ENCODE measurements at regions of chrX and their contacts with region 1.

Region 1: DNA sequence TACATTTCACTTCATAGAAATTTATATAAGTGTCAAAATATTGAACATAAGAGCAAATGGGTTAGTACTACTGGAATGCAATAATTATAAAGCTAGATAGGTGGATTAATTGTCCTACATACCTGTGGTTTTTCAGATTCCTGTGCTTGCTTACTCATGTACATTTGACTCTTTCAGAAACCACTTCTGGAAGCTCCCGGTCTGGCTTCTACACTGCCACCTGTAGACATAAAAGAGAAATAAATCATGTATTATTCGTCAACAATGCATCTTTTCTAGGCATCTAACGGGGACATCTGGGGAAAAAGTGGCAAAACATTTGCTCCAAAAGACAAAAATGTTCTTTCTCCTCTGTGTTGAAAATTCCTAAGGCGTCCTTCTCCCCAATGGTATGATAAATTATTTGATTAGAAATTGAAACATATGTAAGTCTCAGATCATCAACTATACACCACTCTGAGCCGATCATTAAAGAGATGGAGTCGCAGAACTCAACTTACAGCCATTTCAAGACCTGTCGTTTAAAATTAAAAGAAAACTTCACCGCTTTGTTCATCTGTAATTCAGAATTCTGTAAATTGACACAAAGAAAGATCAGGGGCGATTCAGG is 648.7 kb upstream of the DIPK2B start:
- DNase-seq: peak; percentile 8 to 78
- H3K4me3 ChIP-seq: peak overlapping the region; percentile 69
- H3K27ac ChIP-seq: peak overlapping the region; percentile 92
- H3K4me1 ChIP-seq: peaks cover 31% of the 10 kb centered on the region; the same call in 1 of the 2 replicates
- H3K27me3 ChIP-seq: no peaks in the 10 kb centered on the region
- CTCF ChIP-seq: no peak; the same call in 1 of the 2 replicates

Region 2: DNA sequence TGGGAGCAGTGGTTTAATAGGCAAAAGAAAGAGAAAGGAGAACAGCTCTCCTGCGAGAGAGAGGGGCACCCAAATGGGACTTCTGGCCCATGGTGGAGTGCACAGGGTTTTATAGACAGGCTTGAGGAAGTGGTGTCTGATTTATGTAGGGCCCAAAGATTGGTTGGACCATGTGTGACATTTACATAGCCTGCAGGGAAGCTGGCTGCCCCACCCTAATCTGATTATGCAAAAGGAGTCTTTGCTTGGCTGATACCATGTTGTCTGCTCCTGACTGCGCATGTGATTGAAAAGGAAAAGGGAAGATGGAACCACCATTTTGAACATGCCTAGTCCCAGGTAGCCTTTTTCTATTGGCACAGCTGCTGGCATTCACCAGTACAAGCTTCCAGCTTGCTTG is 548.7 kb before region 1 on chrX:
- CTCF ChIA-PET with region 1: no interaction called
- POLR2A ChIA-PET with region 1: no interaction called
- intact Hi-C with region 1: no loop called
- DNase-seq: no peak
- H3K4me3 ChIP-seq: no peak overlapping the region
- H3K27ac ChIP-seq: no peak overlapping the region
- H3K4me1 ChIP-seq: no peaks in the 10 kb centered on the region
- H3K27me3 ChIP-seq: no peaks in the 10 kb centered on the region
- CTCF ChIP-seq: no peak

Region 3: DNA sequence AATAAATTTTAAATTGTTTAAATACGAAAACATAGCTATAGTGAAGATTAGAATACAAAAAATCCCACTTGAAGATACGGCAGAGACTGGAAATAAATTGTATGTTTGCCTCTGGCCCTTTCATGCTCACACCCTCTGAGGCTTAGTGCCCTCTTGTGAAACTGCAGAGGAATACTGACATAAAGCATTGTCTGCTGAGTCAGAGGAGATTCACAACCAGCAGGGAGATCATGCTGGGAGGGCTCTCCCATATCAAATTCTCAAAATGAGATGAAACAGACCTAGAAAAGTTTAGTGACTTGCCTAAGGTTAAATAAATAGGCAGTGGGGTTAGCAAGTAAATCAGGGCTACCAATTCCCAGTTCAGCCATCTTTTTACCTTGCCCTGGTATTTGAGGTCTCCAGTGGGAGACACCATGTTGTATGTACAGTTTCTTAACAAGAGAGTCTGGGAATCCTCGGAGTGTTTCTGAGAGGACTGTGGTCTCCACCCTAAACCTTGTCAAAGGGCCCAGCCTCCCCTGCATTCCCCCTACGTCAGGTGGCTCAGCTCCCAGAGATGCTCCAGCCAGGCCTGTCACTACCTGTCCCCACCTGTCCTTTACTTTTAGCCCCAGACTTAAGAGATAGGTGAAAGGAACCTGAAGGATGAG is 67.3 kb before region 1 on chrX:
- CTCF ChIA-PET with region 1: no interaction called
- POLR2A ChIA-PET with region 1: interaction called, 33 read pairs
- intact Hi-C with region 1: no loop called
- DNase-seq: peak in 1 of 2 experiments; percentile 37
- H3K4me3 ChIP-seq: no peak overlapping the region
- H3K27ac ChIP-seq: peak overlapping the region; percentile 34; the same call in 1 of the 2 replicates
- H3K4me1 ChIP-seq: peaks cover 26% of the 10 kb centered on the region
- H3K27me3 ChIP-seq: no peaks in the 10 kb centered on the region
- CTCF ChIP-seq: no peak

Region 4: DNA sequence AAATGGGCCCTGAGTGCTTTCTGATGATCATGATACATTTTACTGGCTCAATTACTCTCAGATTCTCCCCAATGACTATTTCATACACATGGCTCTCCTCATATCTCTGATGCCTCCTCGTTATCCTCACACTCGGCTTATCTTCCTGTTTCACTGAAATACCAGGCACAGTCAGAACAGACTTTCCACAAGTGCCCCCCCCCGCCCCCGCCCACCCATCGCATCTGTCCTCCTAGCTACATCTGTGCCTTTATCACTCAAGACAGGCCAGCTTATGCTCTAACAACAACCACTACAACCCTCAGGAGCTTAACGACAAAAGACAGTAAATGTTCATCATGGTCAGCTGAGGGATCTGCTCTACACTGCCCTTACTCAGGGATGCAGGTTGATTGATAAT is 38.0 kb before region 1 on chrX:
- CTCF ChIA-PET with region 1: no interaction called
- POLR2A ChIA-PET with region 1: interaction called, 11 read pairs
- intact Hi-C with region 1: no loop called
- DNase-seq: no peak
- H3K4me3 ChIP-seq: no peak overlapping the region
- H3K27ac ChIP-seq: no peak overlapping the region
- H3K4me1 ChIP-seq: no peaks in the 10 kb centered on the region
- H3K27me3 ChIP-seq: no peaks in the 10 kb centered on the region
- CTCF ChIP-seq: no peak

Region 5: DNA sequence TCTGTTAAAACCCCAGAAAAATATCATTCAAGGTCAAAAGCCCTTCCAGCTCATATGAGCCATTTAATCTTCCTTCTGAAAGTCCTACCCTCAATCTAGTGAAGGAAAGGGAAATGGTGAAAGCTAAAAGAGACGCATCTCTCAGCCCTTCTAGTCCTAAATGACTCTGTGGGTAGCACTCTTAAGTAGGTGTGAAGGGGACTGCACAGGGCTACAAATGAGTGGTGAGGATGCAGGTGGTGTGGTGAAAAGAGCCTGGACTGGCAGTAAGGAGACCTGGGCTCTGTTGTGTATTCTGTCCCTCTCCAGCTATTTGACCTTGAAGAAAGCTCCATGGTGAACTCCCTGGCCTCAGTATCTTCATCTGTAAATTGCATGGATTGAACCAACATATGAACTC is 23.1 kb after region 1 on chrX:
- CTCF ChIA-PET with region 1: no interaction called
- POLR2A ChIA-PET with region 1: no interaction called
- intact Hi-C with region 1: no loop called
- DNase-seq: no peak
- H3K4me3 ChIP-seq: no peak overlapping the region
- H3K27ac ChIP-seq: no peak overlapping the region
- H3K4me1 ChIP-seq: no peaks in the 10 kb centered on the region
- H3K27me3 ChIP-seq: no peaks in the 10 kb centered on the region
- CTCF ChIP-seq: no peak

Region 6: DNA sequence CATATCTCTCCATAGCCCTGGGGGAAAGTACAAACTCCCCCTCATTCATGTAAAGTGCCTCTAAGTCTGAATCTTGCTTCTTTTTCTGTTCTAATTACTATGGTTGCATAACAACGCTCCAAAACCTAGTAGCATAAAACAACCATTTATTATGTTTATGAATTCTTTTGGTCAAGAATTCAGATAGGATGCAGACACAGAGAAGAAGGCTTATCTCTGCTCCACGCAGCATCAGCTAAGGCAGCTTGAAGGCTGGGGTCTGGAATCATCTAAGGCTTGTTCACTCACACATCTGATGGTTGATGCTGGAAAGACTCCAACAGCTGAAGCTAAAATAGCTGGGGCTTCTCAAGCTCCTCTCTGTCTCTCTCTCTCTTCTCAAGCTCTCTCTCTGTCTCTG is 131.4 kb after region 1 on chrX:
- CTCF ChIA-PET with region 1: no interaction called
- POLR2A ChIA-PET with region 1: no interaction called
- intact Hi-C with region 1: no loop called
- DNase-seq: no peak
- H3K4me3 ChIP-seq: no peak overlapping the region
- H3K27ac ChIP-seq: no peak overlapping the region
- H3K4me1 ChIP-seq: no peaks in the 10 kb centered on the region
- H3K27me3 ChIP-seq: no peaks in the 10 kb centered on the region
- CTCF ChIP-seq: no peak

Region 7: DNA sequence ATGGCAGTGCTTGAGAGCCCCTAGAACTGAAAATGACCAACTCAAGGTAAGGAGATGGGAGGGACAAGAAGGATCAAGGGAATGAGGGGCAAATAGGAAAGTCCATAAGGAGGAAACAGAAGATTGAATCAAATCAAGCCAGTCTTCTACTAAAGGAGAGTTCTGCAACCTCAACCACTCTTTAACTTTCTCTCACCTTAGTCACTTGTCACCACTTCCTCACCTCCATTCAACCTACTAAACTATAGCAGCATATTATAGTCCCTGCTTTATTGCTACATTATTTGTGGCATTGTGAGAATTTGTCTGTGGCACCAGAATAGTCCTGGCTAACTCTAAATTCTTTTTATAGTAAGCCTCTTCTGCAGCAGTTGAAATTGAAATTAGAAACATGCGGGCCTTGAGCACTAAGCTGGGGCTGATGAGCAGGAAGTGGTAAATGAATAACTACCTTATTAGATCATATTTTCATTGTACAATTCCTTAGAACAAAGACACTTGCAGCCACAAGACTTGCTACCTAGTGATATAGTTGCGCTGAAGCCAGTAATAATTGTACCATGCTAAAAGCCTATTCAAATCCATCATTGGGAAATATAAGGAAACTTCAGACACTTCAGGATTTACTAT is 359.0 kb after region 1 on chrX:
- CTCF ChIA-PET with region 1: no interaction called
- POLR2A ChIA-PET with region 1: no interaction called
- intact Hi-C with region 1: loop called (anchors 2 kb)
- DNase-seq: peak in 1 of 2 experiments; percentile 83
- H3K4me3 ChIP-seq: no peak overlapping the region
- H3K27ac ChIP-seq: peak overlapping the region; percentile 93
- H3K4me1 ChIP-seq: peaks cover 29% of the 10 kb centered on the region
- H3K27me3 ChIP-seq: no peaks in the 10 kb centered on the region
- CTCF ChIP-seq: no peak

Region 8: GRCh38 chrX:46279925-46280313 is 430.6 kb after region 1 on chrX:
- CTCF ChIA-PET with region 1: no interaction called
- POLR2A ChIA-PET with region 1: no interaction called
- intact Hi-C with region 1: no loop called
- DNase-seq: no peak
- H3K4me3 ChIP-seq: no peak overlapping the region
- H3K27ac ChIP-seq: no peak overlapping the region
- H3K4me1 ChIP-seq: no peaks in the 10 kb centered on the region
- H3K27me3 ChIP-seq: no peaks in the 10 kb centered on the region
- CTCF ChIP-seq: no peak

Region 9: DNA sequence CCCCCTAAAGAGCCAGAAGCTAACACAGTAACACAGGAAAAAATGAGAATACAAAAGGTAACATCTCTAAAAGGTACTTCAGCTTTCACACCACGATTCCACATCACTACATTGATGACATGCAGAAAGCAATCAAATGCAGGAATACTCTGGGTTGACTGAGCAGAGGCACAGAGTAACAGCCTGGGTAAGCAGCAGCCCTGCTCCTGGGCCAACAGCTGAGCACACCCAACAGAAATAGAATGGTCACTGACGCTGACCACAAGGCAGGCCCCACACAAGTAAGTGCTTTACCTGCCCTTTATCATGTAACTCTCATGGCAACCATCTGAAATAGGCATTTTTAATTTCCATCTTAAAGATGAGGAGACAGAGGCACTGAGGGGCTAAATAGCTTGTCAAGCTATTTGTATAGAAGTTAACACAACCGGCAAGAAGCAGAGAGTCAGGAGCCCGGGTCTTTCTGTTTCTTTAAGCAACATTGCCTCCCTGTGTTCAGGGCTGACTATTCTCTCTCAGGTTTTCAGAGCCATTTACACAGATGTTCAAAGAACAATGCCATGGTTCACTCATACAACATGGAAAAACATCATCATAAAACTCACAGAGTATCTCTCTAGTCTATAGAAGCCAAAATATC is 527.0 kb after region 1 on chrX:
- CTCF ChIA-PET with region 1: no interaction called
- POLR2A ChIA-PET with region 1: interaction called, 13 read pairs
- intact Hi-C with region 1: loop called (anchors 1 kb)
- DNase-seq: peak; percentile 26 to 48
- H3K4me3 ChIP-seq: 0 out of 2 replicates have a peak overlapping the region, but pooled peaks have one; percentile 5
- H3K27ac ChIP-seq: peak overlapping the region; percentile 94
- H3K4me1 ChIP-seq: peaks cover 25% of the 10 kb centered on the region
- H3K27me3 ChIP-seq: no peaks in the 10 kb centered on the region
- CTCF ChIP-seq: peak; percentile 46; the same call in 1 of the 2 replicates

Measured in PC-9 (cell line).